ENCODE measurements at regions of chr22 and their contacts with region 1.

Region 1: DNA sequence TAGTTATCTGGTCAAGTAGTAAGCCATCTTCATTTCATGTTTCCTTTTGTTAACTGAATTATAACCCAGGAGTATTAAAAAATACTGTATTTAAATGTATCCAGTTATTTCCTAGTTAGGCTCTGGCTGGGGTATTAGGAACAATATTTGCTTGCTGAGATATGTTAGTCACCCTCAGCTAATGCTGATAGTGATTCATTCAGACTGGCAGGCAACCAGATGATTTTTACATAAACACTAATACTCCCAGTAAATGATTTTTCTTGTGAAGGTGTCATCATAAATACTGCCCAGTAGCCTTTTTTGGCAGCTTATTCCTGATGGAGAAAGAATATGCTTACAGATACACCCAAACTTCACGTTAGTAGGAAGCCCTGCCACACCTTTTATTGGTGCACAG is 8.1 kb downstream of the YWHAH start:
- DNase-seq: no peak
- ATAC-seq: no peak

Region 2: DNA sequence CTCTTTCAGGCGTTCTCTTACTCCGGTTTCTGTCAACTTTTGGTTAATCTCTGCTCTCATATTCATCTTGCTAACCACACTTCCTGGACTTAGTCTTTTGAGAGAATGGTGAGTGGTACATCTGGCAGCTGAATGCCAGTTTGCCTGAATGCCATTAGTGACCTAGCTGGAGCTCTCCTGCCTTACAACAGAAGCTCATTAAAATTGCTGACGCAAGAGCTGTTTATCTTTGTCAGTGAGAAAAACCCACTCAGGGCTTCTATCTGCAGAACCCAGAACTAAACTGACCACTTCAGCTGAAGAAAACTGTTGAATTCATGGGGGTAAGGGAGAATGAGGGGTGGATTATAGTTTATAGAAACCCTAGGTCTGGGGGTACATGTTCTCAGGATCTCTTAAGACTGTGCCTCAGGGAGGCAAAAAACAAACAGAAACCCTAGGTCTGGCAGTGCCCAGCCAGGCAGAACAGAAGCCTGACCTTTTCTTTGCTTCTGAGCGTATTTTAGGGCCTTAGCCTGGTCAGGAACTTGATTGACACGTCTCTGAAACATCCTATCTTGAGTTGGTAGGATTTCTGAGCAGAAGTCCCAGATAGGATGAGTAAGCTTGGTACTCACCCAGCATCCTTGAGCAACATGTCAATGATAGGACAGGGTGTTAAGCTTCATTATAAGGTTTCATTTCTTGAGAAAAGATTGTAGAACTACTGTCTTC is 60.9 kb before region 1 on chr22:
- intact Hi-C with region 1: loop called in 1 of 2 experiments (anchors 10 kb)
- DNase-seq: no peak
- ATAC-seq: no peak

Region 3: GRCh38 chr22:32144496-32145274 is 192.2 kb after region 1 on chr22:
- intact Hi-C with region 1: no loop called
- DNase-seq: no peak
- ATAC-seq: no peak

Region 4: DNA sequence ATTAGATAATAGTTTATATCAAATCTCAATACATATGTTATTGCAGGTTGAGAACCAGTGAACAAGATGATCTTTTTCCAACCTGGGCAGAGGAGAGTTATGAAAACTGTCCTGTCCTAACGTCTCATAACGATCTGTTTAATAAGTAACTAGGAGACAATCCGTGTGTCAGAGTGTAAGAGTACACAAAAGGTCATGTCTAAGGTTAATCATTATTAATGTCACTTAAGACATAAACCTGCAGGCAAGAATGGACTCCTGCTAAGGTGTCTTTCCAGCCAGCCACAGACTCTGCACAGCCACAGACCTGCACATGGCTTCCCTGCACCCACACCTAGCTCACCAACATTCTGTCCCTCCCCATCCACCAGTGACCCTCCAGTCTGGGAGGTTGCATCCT is 292.6 kb after region 1 on chr22:
- intact Hi-C with region 1: no loop called
- DNase-seq: no peak
- ATAC-seq: peak; percentile 93

Measured in left colon (tissue), 2 donors.